H1 (cell line): ENCODE measurements at regions of chr1 and their contacts with region 1.

Region 1: GRCh38 chr1:15323351-15323988 is 76.4 kb downstream of the FHAD1 start:
- DNase-seq: peak; percentile 34 to 85
- H3K4me3 ChIP-seq: no peak overlapping the region
- H3K27ac ChIP-seq: no peak overlapping the region
- H3K4me1 ChIP-seq: peaks cover 0 to 11% (median 6%) of the 10 kb centered on the region in 4 experiments; a peak in 5 of 7 replicates
- H3K27me3 ChIP-seq: no peaks in the 10 kb centered on the region
- CTCF ChIP-seq: peak; percentile 92 to 99 (median 98)
- EP300 ChIP-seq: no peak
- POLR2A ChIP-seq: no peak
- RAD21 ChIP-seq: peak; percentile 79 to 89

Region 2: GRCh38 chr1:15110875-15111230 is 212.6 kb before region 1 on chr1:
- CTCF ChIA-PET with region 1: interaction called, 12 read pairs
- POLR2A ChIA-PET with region 1: no interaction called
- DNase-seq: no peak
- H3K4me3 ChIP-seq: no peak overlapping the region
- H3K27ac ChIP-seq: no peak overlapping the region
- H3K4me1 ChIP-seq: peaks cover 14 to 32% (median 16%) of the 10 kb centered on the region in 4 experiments
- H3K27me3 ChIP-seq: no peaks in the 10 kb centered on the region; a peak in 1 of 7 replicates
- CTCF ChIP-seq: peak; percentile 56 to 63 (median 60)
- EP300 ChIP-seq: no peak
- POLR2A ChIP-seq: no peak
- RAD21 ChIP-seq: peak; percentile 48 to 69

Region 3: DNA sequence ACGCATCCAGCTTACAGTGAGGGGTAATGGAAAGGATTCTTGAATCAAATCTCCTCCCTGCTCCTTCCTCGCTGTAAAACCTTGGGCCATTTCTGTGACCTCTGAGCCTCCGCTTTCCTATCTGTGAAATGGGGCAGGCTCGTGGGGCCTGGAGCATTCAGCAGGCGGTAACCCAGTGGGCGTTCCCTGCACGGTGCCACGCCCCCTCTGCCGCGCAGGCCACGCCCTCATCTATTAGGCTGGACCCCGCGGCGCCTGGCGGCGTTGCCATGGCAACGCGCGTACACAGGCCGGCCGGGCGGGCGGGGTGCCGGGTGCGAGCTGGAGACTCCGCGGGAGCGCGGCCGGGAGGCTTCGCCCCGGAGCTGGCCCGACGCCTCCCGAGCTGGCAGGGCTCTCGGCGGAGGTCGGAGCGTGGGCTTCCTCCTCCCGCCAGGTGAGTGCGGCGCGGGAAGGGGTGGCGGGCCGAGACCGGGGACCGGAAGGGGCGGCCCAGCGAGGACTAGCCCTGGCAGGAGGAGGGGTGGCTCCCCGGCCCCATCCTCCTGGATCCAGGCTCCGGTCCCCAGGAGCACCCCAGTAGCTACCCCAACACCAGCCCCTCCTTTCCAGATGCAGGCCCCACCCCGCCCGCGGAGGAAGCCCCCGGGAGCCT is 76.4 kb before region 1 on chr1 and contains the start of gene FHAD1:
- CTCF ChIA-PET with region 1: no interaction called
- POLR2A ChIA-PET with region 1: no interaction called
- DNase-seq: peak; percentile 68 to 94
- H3K4me3 ChIP-seq: peak within 1 kb of the TSS; percentile 75 to 83 (median 77)
- H3K27ac ChIP-seq: peak within 1 kb of the TSS; percentile 67; the same call in 1 of the 2 replicates
- H3K4me1 ChIP-seq: peaks cover 0 to 10% (median 2%) of the 10 kb centered on the region in 4 experiments; a peak in 5 of 7 replicates
- H3K27me3 ChIP-seq: no peaks in the 10 kb centered on the region
- CTCF ChIP-seq: no peak
- EP300 ChIP-seq: no peak
- POLR2A ChIP-seq: no peak
- RAD21 ChIP-seq: no peak
- total RNA-seq, gene FHAD1: 0.69 and 1.5 TPM in 2 replicates

Region 4: GRCh38 chr1:15304701-15305467 is 18.6 kb before region 1 on chr1:
- CTCF ChIA-PET with region 1: interaction called, 15 read pairs
- POLR2A ChIA-PET with region 1: no interaction called
- DNase-seq: peak; percentile 17 to 89
- H3K4me3 ChIP-seq: no peak overlapping the region
- H3K27ac ChIP-seq: no peak overlapping the region
- H3K4me1 ChIP-seq: no peaks in the 10 kb centered on the region
- H3K27me3 ChIP-seq: no peaks in the 10 kb centered on the region; a peak in 1 of 7 replicates
- CTCF ChIP-seq: peak; percentile 72 to 86 (median 81)
- EP300 ChIP-seq: no peak
- POLR2A ChIP-seq: no peak
- RAD21 ChIP-seq: peak; percentile 86 to 87

Region 5: GRCh38 chr1:15362737-15363128 is 39.3 kb after region 1 on chr1:
- CTCF ChIA-PET with region 1: interaction called, 20 read pairs
- POLR2A ChIA-PET with region 1: no interaction called
- DNase-seq: no peak
- H3K4me3 ChIP-seq: no peak overlapping the region
- H3K27ac ChIP-seq: no peak overlapping the region
- H3K4me1 ChIP-seq: no peaks in the 10 kb centered on the region
- H3K27me3 ChIP-seq: no peaks in the 10 kb centered on the region; a peak in 1 of 7 replicates
- CTCF ChIP-seq: no peak
- EP300 ChIP-seq: no peak
- POLR2A ChIP-seq: no peak
- RAD21 ChIP-seq: no peak

Region 6: DNA sequence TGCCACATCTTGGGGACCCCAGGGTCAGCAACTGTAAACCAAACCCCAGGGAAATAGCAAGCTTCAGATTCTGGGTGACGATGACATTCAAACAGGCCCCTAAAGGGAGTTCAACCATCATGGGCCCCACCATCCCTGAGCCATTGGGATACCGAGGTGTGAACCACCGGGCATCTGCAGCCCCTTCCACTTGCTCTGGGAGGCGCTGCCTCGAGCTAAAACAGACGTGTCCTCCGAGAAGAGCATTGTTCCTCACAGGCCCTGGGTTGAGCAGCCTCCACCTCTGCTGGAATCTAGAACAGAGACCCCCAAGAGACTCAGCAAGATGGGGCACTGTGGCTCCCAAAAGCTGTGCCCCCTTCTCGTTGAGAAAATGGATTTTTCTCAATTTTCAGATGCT is 67.2 kb after region 1 on chr1:
- CTCF ChIA-PET with region 1: interaction called, 11 read pairs
- POLR2A ChIA-PET with region 1: no interaction called
- DNase-seq: no peak
- H3K4me3 ChIP-seq: no peak overlapping the region
- H3K27ac ChIP-seq: no peak overlapping the region
- H3K4me1 ChIP-seq: peaks cover 11 to 17% (median 15%) of the 10 kb centered on the region in 4 experiments
- H3K27me3 ChIP-seq: peaks cover 2 to 21% (median 13%) of the 10 kb centered on the region in 4 experiments
- CTCF ChIP-seq: peak; percentile 36 to 67 (median 57)
- EP300 ChIP-seq: no peak
- POLR2A ChIP-seq: no peak
- RAD21 ChIP-seq: peak in 1 of 2 experiments; percentile 54; a peak in 2 of 4 replicates

Region 7: DNA sequence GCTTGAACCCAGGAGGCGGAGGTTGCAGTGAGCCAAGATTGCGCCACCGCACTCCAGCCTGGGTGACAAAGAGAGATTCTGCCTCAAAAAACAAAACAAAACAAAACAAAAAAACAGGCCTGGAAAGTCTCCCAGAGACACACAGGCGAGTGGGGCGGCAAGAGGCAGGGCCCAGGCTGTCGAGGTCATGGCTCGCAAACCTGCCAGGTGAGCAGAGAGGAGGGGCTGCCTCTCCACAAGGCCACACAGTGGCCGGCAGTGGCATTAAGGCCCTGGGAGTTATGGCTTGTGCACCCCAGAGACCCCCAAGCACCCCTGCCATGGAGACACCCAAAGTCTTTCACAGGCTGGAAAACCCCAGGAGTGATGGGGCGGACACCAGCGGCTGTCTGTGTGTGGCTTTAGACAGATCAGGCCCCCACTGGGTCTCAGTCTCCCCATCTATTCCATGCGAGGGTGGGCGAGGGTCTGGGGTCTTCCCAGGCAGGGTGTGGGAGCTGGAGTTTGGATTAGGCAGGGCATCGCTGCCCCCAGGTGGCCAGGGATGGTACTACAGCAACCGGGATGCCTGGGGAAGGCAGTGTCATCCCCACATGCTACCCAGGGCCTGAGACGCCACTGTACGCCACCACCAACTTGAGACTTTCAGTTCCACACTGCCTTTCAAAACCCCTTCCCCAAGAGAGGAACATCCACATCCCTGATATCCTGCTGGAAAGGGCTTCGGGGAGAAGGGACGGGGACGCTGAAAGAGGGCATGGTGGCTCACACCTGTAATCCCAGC is 107.5 kb after region 1 on chr1:
- CTCF ChIA-PET with region 1: interaction called, 170 read pairs
- POLR2A ChIA-PET with region 1: interaction called, 4 read pairs
- DNase-seq: peak; percentile 69 to 100
- H3K4me3 ChIP-seq: no peak overlapping the region
- H3K27ac ChIP-seq: no peak overlapping the region
- H3K4me1 ChIP-seq: peaks cover 0 to 7% (median 3%) of the 10 kb centered on the region in 4 experiments; a peak in 5 of 7 replicates
- H3K27me3 ChIP-seq: no peaks in the 10 kb centered on the region; a peak in 1 of 7 replicates
- CTCF ChIP-seq: peak; percentile 88 to 99 (median 96)
- EP300 ChIP-seq: no peak
- POLR2A ChIP-seq: no peak
- RAD21 ChIP-seq: peak; percentile 94

Region 8: GRCh38 chr1:15508700-15509487 is 185.4 kb after region 1 on chr1:
- CTCF ChIA-PET with region 1: no interaction called
- POLR2A ChIA-PET with region 1: no interaction called
- DNase-seq: peak; percentile 62 to 82
- H3K4me3 ChIP-seq: peak overlapping the region in 1 of 4 experiments; percentile 23; a peak in 2 of 8 replicates
- H3K27ac ChIP-seq: peak overlapping the region; percentile 84
- H3K4me1 ChIP-seq: peaks cover 13 to 31% (median 23%) of the 10 kb centered on the region in 4 experiments
- H3K27me3 ChIP-seq: no peaks in the 10 kb centered on the region
- CTCF ChIP-seq: no peak
- EP300 ChIP-seq: peak in 1 of 2 experiments; percentile 40; a peak in 1 of 3 replicates
- POLR2A ChIP-seq: peak in 1 of 2 experiments; percentile 64; a peak in 2 of 3 replicates
- RAD21 ChIP-seq: no peak